ENCODE measurements at regions of chr4 and their contacts with region 1.

Region 1: GRCh38 chr4:138680989-138681604 is 334.5 kb upstream of the NOCT start:
- DNase-seq: peak in 1 of 2 experiments; percentile 91
- H3K4me3 ChIP-seq: no peak overlapping the region
- H3K27ac ChIP-seq: no peak overlapping the region
- H3K4me1 ChIP-seq: peaks cover 5 to 21% (median 9%) of the 10 kb centered on the region in 4 experiments
- H3K27me3 ChIP-seq: no peaks in the 10 kb centered on the region; a peak in 1 of 7 replicates
- CTCF ChIP-seq: peak; percentile 51 to 87 (median 80)
- EP300 ChIP-seq: no peak
- POLR2A ChIP-seq: no peak
- RAD21 ChIP-seq: peak; percentile 97 to 98

Region 2: GRCh38 chr4:138035781-138036258 is 645.3 kb before region 1 on chr4:
- CTCF ChIA-PET with region 1: interaction called, 26 read pairs
- POLR2A ChIA-PET with region 1: no interaction called
- DNase-seq: no peak
- H3K4me3 ChIP-seq: no peak overlapping the region
- H3K27ac ChIP-seq: no peak overlapping the region
- H3K4me1 ChIP-seq: no peaks in the 10 kb centered on the region
- H3K27me3 ChIP-seq: no peaks in the 10 kb centered on the region
- CTCF ChIP-seq: peak in 2 of 3 experiments; percentile 61 to 77; a peak in 3 of 4 replicates
- EP300 ChIP-seq: no peak
- POLR2A ChIP-seq: no peak
- RAD21 ChIP-seq: peak; percentile 91 to 95

Region 3: DNA sequence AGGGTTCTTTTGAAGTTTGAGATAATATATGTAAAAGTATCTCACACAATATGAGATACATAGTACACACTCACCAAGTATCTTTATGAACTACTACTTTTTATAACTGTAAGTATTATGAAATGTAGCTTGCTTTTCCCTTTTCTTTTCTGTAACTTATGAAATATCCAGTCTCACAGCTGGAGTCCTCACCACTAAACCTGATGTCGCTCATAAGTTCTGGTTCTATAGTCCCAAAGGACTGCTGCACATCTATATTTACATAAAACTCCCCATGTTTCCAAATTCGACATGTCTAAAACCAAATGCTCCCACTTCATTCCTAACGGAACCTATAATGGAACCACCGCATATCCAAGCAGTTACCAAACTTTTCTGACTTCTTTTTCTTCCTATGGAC is 252.5 kb before region 1 on chr4:
- CTCF ChIA-PET with region 1: no interaction called
- POLR2A ChIA-PET with region 1: no interaction called
- DNase-seq: no peak
- H3K4me3 ChIP-seq: no peak overlapping the region
- H3K27ac ChIP-seq: no peak overlapping the region
- H3K4me1 ChIP-seq: no peaks in the 10 kb centered on the region
- H3K27me3 ChIP-seq: no peaks in the 10 kb centered on the region
- CTCF ChIP-seq: no peak
- EP300 ChIP-seq: no peak
- POLR2A ChIP-seq: no peak
- RAD21 ChIP-seq: no peak

Region 4: DNA sequence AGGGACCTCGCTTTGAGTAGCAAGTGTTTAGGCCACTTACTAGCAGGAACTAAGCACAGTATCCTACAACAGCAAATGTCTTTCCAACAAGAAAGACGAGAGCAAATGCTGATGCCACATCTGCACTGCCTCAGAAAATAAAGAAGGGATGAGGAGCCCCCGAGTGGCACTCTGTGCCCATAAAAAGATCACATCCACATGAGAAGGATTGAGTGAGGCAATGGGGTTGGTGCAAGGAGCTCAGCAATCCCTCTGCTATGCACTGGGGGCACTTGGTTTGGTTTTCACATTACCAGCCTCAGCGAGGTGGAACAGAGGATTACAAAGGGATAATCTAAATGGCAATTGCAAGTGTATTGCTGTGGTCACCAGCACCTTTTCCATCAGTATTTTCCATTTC is 186.2 kb before region 1 on chr4:
- CTCF ChIA-PET with region 1: interaction called, 12 read pairs
- POLR2A ChIA-PET with region 1: no interaction called
- DNase-seq: peak; percentile 51 to 56
- H3K4me3 ChIP-seq: no peak overlapping the region
- H3K27ac ChIP-seq: no peak overlapping the region
- H3K4me1 ChIP-seq: no peaks in the 10 kb centered on the region
- H3K27me3 ChIP-seq: no peaks in the 10 kb centered on the region
- CTCF ChIP-seq: peak; percentile 38 to 70 (median 69)
- EP300 ChIP-seq: no peak
- POLR2A ChIP-seq: no peak
- RAD21 ChIP-seq: peak; percentile 82 to 85

Region 5: GRCh38 chr4:138555584-138555983 is 125.5 kb before region 1 on chr4:
- CTCF ChIA-PET with region 1: interaction called, 77 read pairs
- POLR2A ChIA-PET with region 1: no interaction called
- DNase-seq: no peak
- H3K4me3 ChIP-seq: no peak overlapping the region
- H3K27ac ChIP-seq: no peak overlapping the region
- H3K4me1 ChIP-seq: peaks cover 0 to 4% (median 0%) of the 10 kb centered on the region in 4 experiments; a peak in 1 of 7 replicates
- H3K27me3 ChIP-seq: no peaks in the 10 kb centered on the region
- CTCF ChIP-seq: peak; percentile 16 to 61 (median 36); a peak in 3 of 4 replicates
- EP300 ChIP-seq: no peak
- POLR2A ChIP-seq: no peak
- RAD21 ChIP-seq: peak; percentile 35 to 41

Region 6: DNA sequence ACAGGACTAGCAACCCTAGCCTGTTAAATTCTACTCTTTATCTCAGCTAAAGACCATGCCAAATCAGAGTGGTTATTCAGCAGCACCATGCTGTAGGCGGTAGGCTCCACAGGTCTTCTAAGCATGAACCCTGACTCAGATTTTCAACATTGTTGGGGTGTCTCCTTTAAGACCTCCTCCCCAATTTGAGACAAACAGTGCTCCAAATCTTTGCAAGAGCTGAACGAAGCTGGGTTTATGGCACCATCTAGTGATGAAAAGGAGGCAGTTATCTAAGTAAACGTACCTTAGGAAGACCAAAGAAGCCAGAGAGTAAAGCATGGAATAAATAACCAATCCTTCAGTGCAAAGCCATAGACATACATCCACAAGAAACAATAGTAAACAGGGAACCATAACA is 104.4 kb before region 1 on chr4:
- CTCF ChIA-PET with region 1: interaction called, 29 read pairs
- POLR2A ChIA-PET with region 1: interaction called, 3 read pairs
- DNase-seq: no peak
- H3K4me3 ChIP-seq: no peak overlapping the region
- H3K27ac ChIP-seq: no peak overlapping the region
- H3K4me1 ChIP-seq: peaks cover 0 to 5% (median 0%) of the 10 kb centered on the region in 4 experiments; a peak in 1 of 7 replicates
- H3K27me3 ChIP-seq: no peaks in the 10 kb centered on the region
- CTCF ChIP-seq: peak in 2 of 3 experiments; percentile 59 to 72; a peak in 3 of 4 replicates
- EP300 ChIP-seq: no peak
- POLR2A ChIP-seq: no peak
- RAD21 ChIP-seq: peak; percentile 89 to 90

Region 7: GRCh38 chr4:138669479-138670315 is 11.4 kb before region 1 on chr4:
- CTCF ChIA-PET with region 1: interaction called, 13 read pairs
- POLR2A ChIA-PET with region 1: no interaction called
- DNase-seq: no peak
- H3K4me3 ChIP-seq: no peak overlapping the region
- H3K27ac ChIP-seq: no peak overlapping the region
- H3K4me1 ChIP-seq: peaks cover 0 to 11% (median 3%) of the 10 kb centered on the region in 4 experiments; a peak in 5 of 7 replicates
- H3K27me3 ChIP-seq: 0 out of 7 replicates have a peak, but pooled peaks cover 0 to 2% (median 0%) of the 10 kb centered on the region in 4 experiments
- CTCF ChIP-seq: no peak
- EP300 ChIP-seq: no peak
- POLR2A ChIP-seq: no peak
- RAD21 ChIP-seq: no peak

Region 8: GRCh38 chr4:138870737-138871554 is 189.8 kb after region 1 on chr4:
- CTCF ChIA-PET with region 1: interaction called, 58 read pairs
- POLR2A ChIA-PET with region 1: no interaction called
- DNase-seq: peak; percentile 41 to 84
- H3K4me3 ChIP-seq: no peak overlapping the region
- H3K27ac ChIP-seq: no peak overlapping the region
- H3K4me1 ChIP-seq: peaks cover 0 to 3% (median under 1%) of the 10 kb centered on the region in 4 experiments; a peak in 4 of 7 replicates
- H3K27me3 ChIP-seq: no peaks in the 10 kb centered on the region
- CTCF ChIP-seq: peak in 2 of 3 experiments; percentile 70 to 85; a peak in 3 of 4 replicates
- EP300 ChIP-seq: no peak
- POLR2A ChIP-seq: no peak
- RAD21 ChIP-seq: peak; percentile 93 to 97

Measured in H1 (cell line).